Adrenal gland (tissue), 19 donors: ENCODE measurements at regions of chr4 and their contacts with region 1.

Region 1: GRCh38 chr4:183838987-183839712 is 66.0 kb upstream of the STOX2 start:
- DNase-seq: no peak
- H3K4me3 ChIP-seq: no peak overlapping the region
- H3K27ac ChIP-seq: no peak overlapping the region
- H3K4me1 ChIP-seq: no peaks in the 10 kb centered on the region
- H3K27me3 ChIP-seq: no peaks in the 10 kb centered on the region
- CTCF ChIP-seq: peak in 3 of 6 experiments; percentile 2 to 25 (median 25)
- POLR2A ChIP-seq: no peak

Region 2: GRCh38 chr4:183747931-183748670 is 91.0 kb before region 1 on chr4:
- intact Hi-C with region 1: no loop called
- DNase-seq: no peak
- H3K4me3 ChIP-seq: no peak overlapping the region
- H3K27ac ChIP-seq: no peak overlapping the region
- H3K4me1 ChIP-seq: no peaks in the 10 kb centered on the region
- H3K27me3 ChIP-seq: no peaks in the 10 kb centered on the region
- CTCF ChIP-seq: no peak
- POLR2A ChIP-seq: no peak

Region 3: GRCh38 chr4:183765251-183765911 is 73.8 kb before region 1 on chr4:
- intact Hi-C with region 1: no loop called
- DNase-seq: peak in 3 of 7 donors; percentile 8 to 55 (median 35)
- H3K4me3 ChIP-seq: no peak overlapping the region
- H3K27ac ChIP-seq: peak overlapping the region in 1 of 5 donors; percentile 76
- H3K4me1 ChIP-seq: no peaks in the 10 kb centered on the region
- H3K27me3 ChIP-seq: no peaks in the 10 kb centered on the region
- CTCF ChIP-seq: no peak
- POLR2A ChIP-seq: no peak

Region 4: GRCh38 chr4:184100297-184100885 is 261.2 kb after region 1 on chr4:
- intact Hi-C with region 1: loop called in 1 of 2 experiments (anchors 5 kb)
- DNase-seq: peak in 6 of 7 donors; percentile 36 to 67 (median 54)
- H3K4me3 ChIP-seq: no peak overlapping the region
- H3K27ac ChIP-seq: no peak overlapping the region
- H3K4me1 ChIP-seq: peaks cover 7 to 9% of the 10 kb centered on the region in 2 donors
- H3K27me3 ChIP-seq: no peaks in the 10 kb centered on the region
- CTCF ChIP-seq: peak in 4 of 6 experiments; percentile 54 to 67 (median 62)
- POLR2A ChIP-seq: no peak

Region 5: GRCh38 chr4:184168406-184169019 is 329.4 kb after region 1 on chr4:
- intact Hi-C with region 1: loop called (anchors 5 kb)
- DNase-seq: peak; percentile 64 to 84 (median 78)
- H3K4me3 ChIP-seq: no peak overlapping the region
- H3K27ac ChIP-seq: no peak overlapping the region
- H3K4me1 ChIP-seq: peaks cover 0 to 9% of the 10 kb centered on the region in 2 donors
- H3K27me3 ChIP-seq: peaks cover 6% of the 10 kb centered on the region
- CTCF ChIP-seq: peak; percentile 69 to 98 (median 94)
- POLR2A ChIP-seq: no peak